ENCODE measurements at regions of chr6 and their contacts with region 1.

Region 1: GRCh38 chr6:33642897-33643296 is 21.8 kb downstream of the ITPR3 start:
- DNase-seq: no peak
- H3K4me3 ChIP-seq: no peak overlapping the region
- H3K27ac ChIP-seq: peak overlapping the region in 3 of 8 donors; percentile 34 to 63 (median 43)
- H3K4me1 ChIP-seq: peaks cover 0 to 49% (median 6%) of the 10 kb centered on the region in 6 donors
- H3K27me3 ChIP-seq: no peaks in the 10 kb centered on the region
- CTCF ChIP-seq: no peak
- POLR2A ChIP-seq: no peak

Region 2: GRCh38 chr6:33454009-33454946 is 188.6 kb before region 1 on chr6 and contains the start of gene ZBTB9:
- intact Hi-C with region 1: loop called (anchors 10 kb)
- DNase-seq: peak; percentile 98
- H3K4me3 ChIP-seq: peak within 1 kb of the TSS; percentile 78 to 98 (median 82)
- H3K27ac ChIP-seq: peak within 1 kb of the TSS; percentile 68 to 93 (median 86)
- H3K4me1 ChIP-seq: peaks cover 12 to 67% (median 34%) of the 10 kb centered on the region in 6 donors
- H3K27me3 ChIP-seq: no peaks in the 10 kb centered on the region
- CTCF ChIP-seq: peak in 4 of 11 experiments; percentile 18 to 45 (median 29)
- POLR2A ChIP-seq: peak; percentile 6 to 72 (median 17)
- total RNA-seq, gene ZBTB9: 4.4 to 8.4 (median 6.1) TPM

Measured in spleen (tissue), 13 donors.